ENCODE measurements at regions of chr12 and their contacts with region 1.

Region 1: GRCh38 chr12:3511760-3512159 is 20.8 kb downstream of the PRMT8 start:
- DNase-seq: no peak
- ATAC-seq: no peak
- H3K4me3 Mint-ChIP-seq: no peak overlapping the region
- H3K27ac Mint-ChIP-seq: no peak overlapping the region
- H3K4me1 Mint-ChIP-seq: no peaks in the 10 kb centered on the region
- H3K27me3 Mint-ChIP-seq: peaks cover 22% of the 10 kb centered on the region

Region 2: DNA sequence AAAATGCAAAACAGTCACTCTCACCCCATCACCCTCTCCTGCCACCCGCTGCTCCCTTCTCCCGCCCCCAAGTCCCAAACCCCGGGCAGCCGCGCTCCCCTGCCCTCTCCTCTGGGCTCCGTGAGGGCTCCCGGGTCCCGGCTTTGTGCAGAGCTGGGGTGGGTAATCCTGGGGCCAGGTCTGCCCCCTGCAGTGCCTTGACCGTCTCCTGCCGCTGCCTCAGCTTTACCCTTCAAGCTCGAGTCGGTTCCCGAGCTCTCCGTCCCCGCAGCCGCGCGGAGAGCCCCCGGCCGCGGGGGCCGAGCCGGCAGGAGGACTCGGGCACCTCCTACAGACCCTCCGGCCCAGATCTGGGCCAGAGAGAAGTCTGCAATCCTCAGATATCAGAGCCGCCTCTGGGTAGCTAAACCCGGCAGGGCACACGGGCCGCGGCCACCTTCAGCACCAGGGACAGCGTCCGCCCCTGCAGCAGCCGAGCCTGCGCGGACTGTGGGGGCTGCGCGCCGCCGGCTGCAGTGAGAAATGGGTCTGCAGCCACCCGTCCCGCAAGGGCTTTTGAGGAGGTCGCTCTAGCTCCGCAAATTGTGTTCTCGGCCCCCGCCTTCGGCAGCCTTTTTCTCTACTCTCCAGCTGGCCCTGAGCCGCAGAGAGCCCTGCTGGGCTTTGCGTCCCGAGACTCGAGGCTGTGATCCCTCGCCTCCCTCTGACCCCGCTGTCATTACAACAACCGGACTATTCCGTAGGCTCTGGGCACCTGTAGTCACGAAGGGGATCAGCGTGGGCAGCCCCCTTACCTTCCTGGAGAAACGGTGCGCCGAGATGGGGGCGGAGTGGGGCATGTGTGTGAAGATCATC is 19.6 kb before region 1 on chr12:
- CTCF ChIA-PET with region 1: no interaction called
- POLR2A ChIA-PET with region 1: no interaction called
- intact Hi-C with region 1: loop called in 1 of 2 experiments (anchors 1 kb)
- DNase-seq: peak; percentile 75
- ATAC-seq: peak; percentile 70
- H3K4me3 Mint-ChIP-seq: no peak overlapping the region
- H3K27ac Mint-ChIP-seq: no peak overlapping the region
- H3K4me1 Mint-ChIP-seq: peaks cover 5% of the 10 kb centered on the region
- H3K27me3 Mint-ChIP-seq: peaks cover 56% of the 10 kb centered on the region

Region 3: GRCh38 chr12:3533703-3534386 is 22.1 kb after region 1 on chr12:
- CTCF ChIA-PET with region 1: no interaction called
- POLR2A ChIA-PET with region 1: no interaction called
- intact Hi-C with region 1: no loop called
- DNase-seq: no peak
- ATAC-seq: no peak
- H3K4me3 Mint-ChIP-seq: no peak overlapping the region
- H3K27ac Mint-ChIP-seq: no peak overlapping the region
- H3K4me1 Mint-ChIP-seq: no peaks in the 10 kb centered on the region
- H3K27me3 Mint-ChIP-seq: peaks cover 5% of the 10 kb centered on the region

Measured in activated CD4-positive, alpha-beta T cell treated with anti-CD3 and anti-CD28 coated beads for 36 hours (primary cell).